ENCODE measurements at regions of chr16 and their contacts with region 1.

Region 1: DNA sequence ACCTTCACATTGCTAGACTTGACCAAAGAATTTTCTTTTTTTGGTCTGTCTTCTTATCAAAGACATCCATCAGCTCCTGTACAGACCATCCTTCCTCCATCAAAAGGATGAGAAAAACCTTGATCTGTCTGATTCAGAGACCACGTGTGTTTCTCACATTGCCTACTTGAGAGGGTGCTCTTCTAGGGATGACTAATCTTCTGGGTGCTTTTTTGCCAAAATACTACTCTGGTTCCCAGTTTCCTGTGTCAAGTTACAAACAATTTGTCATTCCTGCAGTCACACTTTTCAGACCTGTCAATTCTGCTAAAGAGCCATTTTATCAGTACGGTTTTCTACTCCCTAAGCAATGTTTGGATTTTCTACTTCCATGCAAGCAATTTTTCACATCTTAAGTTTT is 492.2 kb downstream of the CDH11 start:
- DNase-seq: no peak
- H3K4me3 ChIP-seq: no peak overlapping the region
- H3K27ac ChIP-seq: no peak overlapping the region
- H3K4me1 ChIP-seq: no peaks in the 10 kb centered on the region
- H3K27me3 ChIP-seq: no peaks in the 10 kb centered on the region
- CTCF ChIP-seq: no peak

Region 2: GRCh38 chr16:64589836-64590235 is 39.8 kb before region 1 on chr16:
- CTCF ChIA-PET with region 1: no interaction called
- dilution Hi-C with region 1: loop called (anchors 10 kb)
- in situ Hi-C with region 1: no loop called
- intact Hi-C with region 1: no loop called
- DNase-seq: no peak
- H3K4me3 ChIP-seq: no peak overlapping the region
- H3K27ac ChIP-seq: no peak overlapping the region
- H3K4me1 ChIP-seq: no peaks in the 10 kb centered on the region
- H3K27me3 ChIP-seq: no peaks in the 10 kb centered on the region
- CTCF ChIP-seq: no peak

Measured in mammary epithelial cell (primary cell).